H1 (cell line): ENCODE measurements at regions of chr12 and their contacts with region 1.

Region 1: GRCh38 chr12:21697904-21698630 is 40.4 kb upstream of the LDHB start:
- DNase-seq: no peak
- H3K4me3 ChIP-seq: no peak overlapping the region
- H3K27ac ChIP-seq: no peak overlapping the region
- H3K4me1 ChIP-seq: peaks cover 0 to 4% (median 0%) of the 10 kb centered on the region in 4 experiments; a peak in 1 of 7 replicates
- H3K27me3 ChIP-seq: no peaks in the 10 kb centered on the region
- CTCF ChIP-seq: peak in 2 of 3 experiments; percentile 27 to 34; a peak in 2 of 4 replicates
- EP300 ChIP-seq: no peak
- POLR2A ChIP-seq: no peak
- RAD21 ChIP-seq: peak in 1 of 2 experiments; percentile 70; a peak in 3 of 4 replicates

Region 2: GRCh38 chr12:21677622-21678277 is 20.3 kb before region 1 on chr12:
- CTCF ChIA-PET with region 1: interaction called, 16 read pairs
- POLR2A ChIA-PET with region 1: no interaction called
- DNase-seq: no peak
- H3K4me3 ChIP-seq: no peak overlapping the region
- H3K27ac ChIP-seq: no peak overlapping the region
- H3K4me1 ChIP-seq: no peaks in the 10 kb centered on the region
- H3K27me3 ChIP-seq: no peaks in the 10 kb centered on the region
- CTCF ChIP-seq: no peak
- EP300 ChIP-seq: no peak
- POLR2A ChIP-seq: no peak
- RAD21 ChIP-seq: no peak

Region 3: GRCh38 chr12:21683115-21683514 is 15.0 kb before region 1 on chr12:
- CTCF ChIA-PET with region 1: interaction called, 16 read pairs
- POLR2A ChIA-PET with region 1: no interaction called
- DNase-seq: no peak
- H3K4me3 ChIP-seq: no peak overlapping the region
- H3K27ac ChIP-seq: no peak overlapping the region
- H3K4me1 ChIP-seq: no peaks in the 10 kb centered on the region
- H3K27me3 ChIP-seq: no peaks in the 10 kb centered on the region; a peak in 1 of 7 replicates
- CTCF ChIP-seq: no peak
- EP300 ChIP-seq: no peak
- POLR2A ChIP-seq: no peak
- RAD21 ChIP-seq: no peak

Region 4: DNA sequence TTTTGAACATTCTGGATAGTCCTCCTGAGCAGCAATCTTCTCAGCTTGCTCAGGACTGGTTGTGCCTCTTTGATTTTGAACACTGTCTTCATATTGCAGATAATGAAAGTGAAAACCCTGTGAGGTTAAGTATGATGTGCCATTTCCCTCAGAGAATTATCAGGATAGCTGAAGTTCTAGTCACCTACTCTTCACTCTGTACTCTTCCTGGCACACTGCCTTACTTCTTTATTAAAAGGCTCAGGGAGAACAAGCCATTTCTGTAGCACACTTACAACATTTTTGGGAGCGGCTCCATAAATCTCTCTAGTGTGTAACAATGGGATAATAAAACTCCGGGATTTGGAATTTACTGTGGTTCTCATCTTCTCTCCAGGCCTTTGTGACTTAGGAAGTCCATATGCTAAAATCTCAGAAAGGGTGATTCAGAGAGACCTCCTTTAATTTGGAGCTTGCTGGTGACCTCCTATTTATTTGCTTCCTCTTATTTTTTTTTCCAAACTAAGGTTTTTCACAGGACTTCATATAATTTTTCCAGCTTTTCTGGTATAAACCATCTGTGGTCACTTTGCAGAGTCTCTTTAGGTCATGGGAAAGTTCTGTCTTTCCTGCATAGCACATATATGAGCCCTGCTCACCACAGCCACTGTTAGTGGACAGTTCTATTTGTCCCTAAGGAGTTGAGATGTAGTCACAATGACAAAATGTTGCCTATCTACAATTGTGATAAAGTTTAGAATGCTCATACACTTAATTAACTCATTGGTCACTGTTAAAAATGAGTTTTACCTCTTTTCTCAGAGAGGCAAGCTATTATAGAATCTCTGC is 13.1 kb after region 1 on chr12:
- CTCF ChIA-PET with region 1: interaction called, 28 read pairs
- POLR2A ChIA-PET with region 1: no interaction called
- DNase-seq: no peak
- H3K4me3 ChIP-seq: no peak overlapping the region
- H3K27ac ChIP-seq: no peak overlapping the region
- H3K4me1 ChIP-seq: no peaks in the 10 kb centered on the region
- H3K27me3 ChIP-seq: no peaks in the 10 kb centered on the region
- CTCF ChIP-seq: no peak
- EP300 ChIP-seq: no peak
- POLR2A ChIP-seq: no peak
- RAD21 ChIP-seq: no peak

Region 5: DNA sequence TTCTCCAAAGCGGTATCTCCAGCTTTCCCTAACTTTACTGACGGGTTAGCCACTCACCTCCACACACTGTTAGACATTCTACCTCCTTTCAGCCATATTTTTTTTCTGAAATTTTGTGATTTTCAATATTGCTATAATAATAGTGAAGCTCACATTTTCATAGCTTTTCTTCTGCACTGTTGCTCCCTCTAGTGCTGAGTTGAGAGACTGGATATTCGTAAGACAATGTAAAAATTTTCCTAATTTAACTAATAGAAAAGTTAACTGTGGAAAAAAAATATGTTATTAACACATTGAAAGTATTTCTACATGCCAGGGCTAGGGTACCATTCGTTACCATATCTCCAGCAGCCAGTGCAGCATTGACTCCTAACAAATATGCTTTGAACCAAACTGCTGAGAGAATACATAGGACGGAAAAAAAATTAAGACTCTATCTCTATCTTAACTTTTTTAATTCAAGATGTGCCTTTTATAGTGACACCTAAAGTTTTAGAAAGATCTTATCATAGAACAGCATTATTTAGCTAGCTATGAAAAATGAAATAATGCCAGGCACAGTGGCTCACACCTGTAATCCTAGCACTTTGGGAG is 291.8 kb after region 1 on chr12:
- CTCF ChIA-PET with region 1: interaction called, 73 read pairs
- POLR2A ChIA-PET with region 1: interaction called, 6 read pairs
- DNase-seq: no peak
- H3K4me3 ChIP-seq: no peak overlapping the region
- H3K27ac ChIP-seq: no peak overlapping the region
- H3K4me1 ChIP-seq: peaks cover 0 to 4% (median 2%) of the 10 kb centered on the region in 4 experiments; a peak in 1 of 7 replicates
- H3K27me3 ChIP-seq: no peaks in the 10 kb centered on the region
- CTCF ChIP-seq: peak in 2 of 3 experiments; percentile 34 to 38; a peak in 2 of 4 replicates
- EP300 ChIP-seq: no peak
- POLR2A ChIP-seq: no peak
- RAD21 ChIP-seq: peak; percentile 50 to 69

Region 6: DNA sequence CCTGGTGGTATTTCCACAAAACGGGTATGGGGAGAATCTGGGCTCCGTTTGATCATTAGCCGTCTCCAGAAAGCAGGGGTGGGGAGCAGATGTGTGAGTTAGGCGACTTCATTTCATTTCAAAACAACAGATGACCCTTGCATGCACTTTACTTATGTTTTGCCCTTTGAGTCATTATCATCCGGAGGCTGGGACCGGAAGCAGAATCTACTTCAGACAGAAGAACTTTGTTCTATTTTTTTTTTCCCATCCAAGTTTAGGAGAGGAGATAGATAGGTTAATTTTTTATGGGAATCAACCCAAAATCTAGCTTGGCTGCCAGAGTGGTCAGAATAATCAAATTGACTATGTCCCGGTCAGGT is 316.7 kb after region 1 on chr12:
- CTCF ChIA-PET with region 1: interaction called, 17 read pairs
- POLR2A ChIA-PET with region 1: no interaction called
- DNase-seq: no peak
- H3K4me3 ChIP-seq: no peak overlapping the region
- H3K27ac ChIP-seq: no peak overlapping the region
- H3K4me1 ChIP-seq: no peaks in the 10 kb centered on the region
- H3K27me3 ChIP-seq: no peaks in the 10 kb centered on the region; a peak in 1 of 7 replicates
- CTCF ChIP-seq: no peak
- EP300 ChIP-seq: no peak
- POLR2A ChIP-seq: no peak
- RAD21 ChIP-seq: no peak